Mammary epithelial cell (primary cell): ENCODE measurements at regions of chr5 and their contacts with region 1.

Region 1: DNA sequence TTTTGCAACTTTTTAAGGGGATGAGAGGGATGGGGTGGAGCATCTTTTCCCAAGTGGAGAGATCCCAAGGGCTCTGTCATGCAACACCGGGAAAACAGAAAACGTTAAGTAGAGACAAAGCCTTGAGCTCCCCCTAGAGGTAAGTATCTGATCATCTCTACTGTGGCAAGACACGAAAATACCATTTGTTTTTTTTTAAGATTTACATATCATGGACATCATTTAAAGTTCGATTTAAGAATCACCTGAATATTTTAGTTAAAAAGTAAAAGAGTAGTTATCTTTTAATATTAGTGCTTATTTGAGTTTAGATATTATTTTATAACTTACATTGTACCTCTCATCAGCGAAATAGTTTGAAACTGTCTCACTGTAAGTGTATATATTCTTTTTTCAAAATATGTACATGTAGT is 200.4 kb downstream of the LRRC70 start:
- DNase-seq: peak; percentile 39
- H3K4me3 ChIP-seq: no peak overlapping the region
- H3K27ac ChIP-seq: no peak overlapping the region
- H3K4me1 ChIP-seq: no peaks in the 10 kb centered on the region
- H3K27me3 ChIP-seq: no peaks in the 10 kb centered on the region
- CTCF ChIP-seq: peak; percentile 78

Region 2: DNA sequence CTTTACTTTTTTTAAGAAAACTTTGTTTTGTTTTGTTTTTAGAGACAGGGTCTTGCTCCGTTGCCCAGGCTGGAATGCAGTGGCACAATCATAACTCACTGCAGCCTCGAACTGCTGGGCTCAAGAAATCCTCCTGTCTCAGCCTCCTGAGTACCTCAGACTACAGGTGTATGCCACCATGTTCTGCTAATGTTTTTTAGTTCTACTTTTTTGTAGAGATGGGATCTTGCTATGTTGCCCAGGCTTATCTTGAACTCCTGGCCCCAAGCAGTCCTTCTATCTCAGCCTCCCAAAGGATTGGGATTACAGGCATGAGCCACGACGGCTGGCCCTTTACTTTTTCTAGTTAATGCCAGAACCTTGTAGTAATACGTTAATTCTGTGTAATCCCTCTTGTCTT is 330.5 kb before region 1 on chr5:
- CTCF ChIA-PET with region 1: no interaction called
- dilution Hi-C with region 1: no loop called
- in situ Hi-C with region 1: loop called in 1 of 2 experiments (anchors 10 kb)
- intact Hi-C with region 1: loop called (anchors 1 kb)
- DNase-seq: no peak
- H3K4me3 ChIP-seq: no peak overlapping the region
- H3K27ac ChIP-seq: no peak overlapping the region
- H3K4me1 ChIP-seq: no peaks in the 10 kb centered on the region
- H3K27me3 ChIP-seq: no peaks in the 10 kb centered on the region
- CTCF ChIP-seq: no peak

Region 3: DNA sequence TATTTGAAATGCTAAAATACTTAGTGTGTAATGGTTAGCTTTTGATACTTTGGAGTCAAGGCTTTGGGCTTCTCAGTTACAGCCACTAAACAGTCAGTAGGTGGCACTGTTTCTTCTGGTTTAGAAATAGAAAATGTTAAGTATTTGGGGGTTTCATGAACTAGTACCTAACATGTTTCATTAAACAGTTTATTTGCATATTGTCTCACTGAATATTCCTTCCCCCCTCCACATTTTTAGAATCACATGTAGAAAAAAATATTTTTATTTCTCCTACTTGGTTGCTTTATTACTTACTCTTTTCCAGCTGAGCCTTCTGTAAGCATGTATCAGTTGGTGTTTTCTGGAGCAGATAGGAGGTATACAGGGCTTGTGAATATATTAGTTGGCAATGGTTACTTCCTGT is 318.4 kb before region 1 on chr5:
- CTCF ChIA-PET with region 1: interaction called, 7 read pairs
- dilution Hi-C with region 1: no loop called
- in situ Hi-C with region 1: loop called in 1 of 2 experiments (anchors 10 kb)
- intact Hi-C with region 1: loop called (anchors 1 kb)
- DNase-seq: peak; percentile 12
- H3K4me3 ChIP-seq: no peak overlapping the region
- H3K27ac ChIP-seq: no peak overlapping the region
- H3K4me1 ChIP-seq: peaks cover 8% of the 10 kb centered on the region
- H3K27me3 ChIP-seq: no peaks in the 10 kb centered on the region
- CTCF ChIP-seq: peak; percentile 75 to 88

Region 4: GRCh38 chr5:64273276-64273675 is 1494.3 kb after region 1 on chr5:
- CTCF ChIA-PET with region 1: no interaction called
- dilution Hi-C with region 1: no loop called
- in situ Hi-C with region 1: no loop called
- intact Hi-C with region 1: no loop called
- DNase-seq: no peak
- H3K4me3 ChIP-seq: no peak overlapping the region
- H3K27ac ChIP-seq: no peak overlapping the region
- H3K4me1 ChIP-seq: no peaks in the 10 kb centered on the region
- H3K27me3 ChIP-seq: no peaks in the 10 kb centered on the region
- CTCF ChIP-seq: no peak